Ascending aorta (tissue), 2 donors: ENCODE measurements at regions of chr9 and their contacts with region 1.

Region 1: GRCh38 chr9:84851935-84852585 is 182.5 kb downstream of the NTRK2 start:
- DNase-seq: peak in 1 of 2 donors; percentile 84
- H3K4me3 ChIP-seq: no peak overlapping the region
- H3K27ac ChIP-seq: no peak overlapping the region
- H3K4me1 ChIP-seq: peaks cover 9 to 23% of the 10 kb centered on the region in 2 donors
- H3K27me3 ChIP-seq: no peaks in the 10 kb centered on the region
- CTCF ChIP-seq: no peak

Region 2: DNA sequence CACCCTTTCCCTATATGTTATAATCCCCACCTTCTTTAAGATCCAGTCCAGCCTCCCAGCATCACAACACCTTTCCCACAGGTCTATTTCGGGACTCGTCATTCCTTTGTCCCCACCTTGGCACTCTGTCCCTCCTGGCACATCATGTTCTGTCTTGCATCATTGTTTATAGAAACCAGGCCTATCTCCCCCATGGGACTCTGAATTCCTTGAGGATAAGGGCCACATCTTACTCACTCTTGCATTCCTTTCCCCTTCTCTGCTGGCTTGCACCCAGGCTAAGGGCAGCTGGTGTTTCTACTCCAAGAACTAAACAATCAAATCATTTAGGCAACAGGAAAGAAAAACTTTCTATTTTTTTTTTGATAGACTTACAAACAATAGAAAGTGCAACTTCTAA is 684.0 kb after region 1 on chr9:
- intact Hi-C with region 1: loop called (anchors 10 kb)
- DNase-seq: peak in 1 of 2 donors; percentile 81
- H3K4me3 ChIP-seq: no peak overlapping the region
- H3K27ac ChIP-seq: no peak overlapping the region
- H3K4me1 ChIP-seq: peaks cover 0 to 2% of the 10 kb centered on the region in 2 donors
- H3K27me3 ChIP-seq: no peaks in the 10 kb centered on the region
- CTCF ChIP-seq: no peak